A673 (cell line): ENCODE measurements at regions of chr2 and their contacts with region 1.

Region 1: DNA sequence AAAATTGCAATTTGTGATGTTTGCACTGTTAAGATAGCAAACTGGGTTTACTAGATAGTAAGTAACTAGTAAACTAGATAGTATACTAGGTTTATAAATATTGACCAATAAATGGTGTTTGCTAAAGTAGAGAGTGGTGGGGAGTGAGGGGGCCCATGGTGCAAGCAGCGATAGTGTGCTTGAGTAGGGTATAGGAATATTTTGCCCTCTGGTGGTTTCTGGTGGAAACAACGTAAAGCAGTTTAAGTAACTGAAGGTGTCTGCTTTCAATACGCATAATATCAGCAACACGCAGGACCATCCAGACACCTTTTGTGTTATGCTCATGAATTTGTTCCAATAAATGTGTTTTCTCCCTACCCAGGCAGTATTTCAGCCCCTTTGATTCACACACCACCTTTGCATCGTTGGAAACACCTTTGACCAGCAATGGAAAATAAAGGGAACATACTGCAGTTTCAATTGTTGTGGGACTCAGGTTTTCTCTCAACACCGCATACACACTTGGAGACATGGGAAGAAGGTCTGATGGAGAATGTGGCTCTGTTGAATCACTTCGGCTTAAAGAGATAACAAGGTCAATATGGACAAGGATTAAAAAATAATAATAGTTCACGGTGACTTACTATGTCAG is 16.7 kb upstream of the STAT1 start:
- DNase-seq: peak; percentile 64
- H3K4me3 ChIP-seq: no peak overlapping the region
- H3K27ac ChIP-seq: no peak overlapping the region
- H3K4me1 ChIP-seq: no peaks in the 10 kb centered on the region
- H3K27me3 ChIP-seq: no peaks in the 10 kb centered on the region
- CTCF ChIP-seq: peak; percentile 75

Region 2: DNA sequence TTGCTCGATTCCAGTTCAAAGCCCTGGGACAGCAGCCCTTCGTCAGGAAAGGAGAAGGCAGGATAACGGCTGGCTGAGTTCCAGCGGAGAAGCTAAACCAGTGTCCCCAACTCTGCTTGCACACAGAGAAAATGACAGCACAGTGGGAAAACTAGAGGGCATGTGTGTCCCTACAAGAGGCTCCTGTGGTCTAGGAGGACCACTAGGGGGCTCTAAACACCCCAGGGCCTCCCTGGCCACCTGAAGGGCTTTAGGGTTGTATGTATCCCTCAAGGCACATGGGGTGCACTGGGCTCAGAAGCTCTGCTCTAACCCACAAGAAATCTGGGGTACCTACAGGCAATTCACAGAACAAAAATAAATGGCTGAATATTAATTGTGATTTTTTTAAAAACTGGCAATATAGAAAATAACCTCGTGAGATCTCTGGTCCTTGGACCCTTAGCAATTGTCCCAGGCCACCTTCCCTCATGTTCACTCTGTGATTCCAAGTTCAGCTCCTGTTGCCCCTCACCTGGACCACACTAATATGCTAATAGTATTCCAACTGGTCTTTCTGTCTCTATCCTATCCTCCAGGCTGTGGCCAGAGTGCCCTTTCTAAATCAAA is 34.2 kb before region 1 on chr2:
- CTCF ChIA-PET with region 1: no interaction called
- POLR2A ChIA-PET with region 1: no interaction called
- intact Hi-C with region 1: loop called (anchors 2 kb)
- DNase-seq: peak; percentile 67
- H3K4me3 ChIP-seq: no peak overlapping the region
- H3K27ac ChIP-seq: no peak overlapping the region
- H3K4me1 ChIP-seq: no peaks in the 10 kb centered on the region
- H3K27me3 ChIP-seq: no peaks in the 10 kb centered on the region
- CTCF ChIP-seq: peak; percentile 77